ENCODE measurements at regions of chr1 and their contacts with region 1.

Region 1: DNA sequence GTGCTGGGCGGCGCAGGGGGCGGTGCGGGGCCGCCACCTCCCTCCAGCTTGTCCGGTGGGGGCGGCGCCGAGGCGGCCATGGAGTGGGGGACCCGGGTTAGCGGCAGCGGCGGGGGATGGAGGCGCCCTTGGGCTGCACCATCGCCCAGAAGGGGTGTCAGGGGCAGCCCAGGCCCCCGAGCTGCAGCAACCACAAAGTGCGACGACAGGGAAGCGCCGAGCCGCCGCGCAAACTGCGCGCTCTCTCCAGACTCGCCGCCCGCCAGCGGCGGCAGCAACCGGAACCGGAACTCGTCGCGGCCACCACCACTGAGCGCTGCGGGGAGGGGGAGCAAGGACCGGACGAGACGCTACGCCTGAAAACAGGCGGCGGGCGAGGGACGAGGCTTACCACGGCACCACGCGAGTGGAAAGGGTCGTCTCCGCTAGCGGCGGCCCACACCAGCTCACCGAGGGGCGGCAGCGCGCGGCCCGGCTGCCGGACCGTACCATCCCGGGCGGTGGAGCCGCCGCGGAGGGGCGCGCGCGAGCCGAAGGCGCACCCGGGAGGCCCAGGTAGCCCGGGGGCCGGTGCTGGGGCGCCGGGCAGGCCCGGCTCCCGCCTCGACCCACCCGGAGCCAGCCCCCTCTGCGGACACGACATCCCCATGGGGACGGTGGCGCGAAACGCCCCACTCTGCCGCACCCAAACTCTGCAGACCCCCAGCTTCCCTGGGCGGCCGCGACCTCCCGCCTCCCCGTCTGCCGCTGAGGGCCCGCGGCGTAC is at the start of gene PYGO2:
- DNase-seq: no peak
- ATAC-seq: peak; percentile 94
- H3K4me3 ChIP-seq: peak within 1 kb of the TSS; percentile 88
- H3K27ac ChIP-seq: peak within 1 kb of the TSS; percentile 97
- H3K4me1 ChIP-seq: peaks cover 7% of the 10 kb centered on the region
- H3K27me3 ChIP-seq: no peaks in the 10 kb centered on the region
- CTCF ChIP-seq: peak; percentile 44 to 73 (median 52); a peak in 5 of 6 replicates
- EP300 ChIP-seq: no peak
- POLR2A ChIP-seq: peak; percentile 95
- RAD21 ChIP-seq: peak; percentile 38
- polyA plus RNA-seq, gene PYGO2: 8.1 to 8.3 TPM

Region 2: DNA sequence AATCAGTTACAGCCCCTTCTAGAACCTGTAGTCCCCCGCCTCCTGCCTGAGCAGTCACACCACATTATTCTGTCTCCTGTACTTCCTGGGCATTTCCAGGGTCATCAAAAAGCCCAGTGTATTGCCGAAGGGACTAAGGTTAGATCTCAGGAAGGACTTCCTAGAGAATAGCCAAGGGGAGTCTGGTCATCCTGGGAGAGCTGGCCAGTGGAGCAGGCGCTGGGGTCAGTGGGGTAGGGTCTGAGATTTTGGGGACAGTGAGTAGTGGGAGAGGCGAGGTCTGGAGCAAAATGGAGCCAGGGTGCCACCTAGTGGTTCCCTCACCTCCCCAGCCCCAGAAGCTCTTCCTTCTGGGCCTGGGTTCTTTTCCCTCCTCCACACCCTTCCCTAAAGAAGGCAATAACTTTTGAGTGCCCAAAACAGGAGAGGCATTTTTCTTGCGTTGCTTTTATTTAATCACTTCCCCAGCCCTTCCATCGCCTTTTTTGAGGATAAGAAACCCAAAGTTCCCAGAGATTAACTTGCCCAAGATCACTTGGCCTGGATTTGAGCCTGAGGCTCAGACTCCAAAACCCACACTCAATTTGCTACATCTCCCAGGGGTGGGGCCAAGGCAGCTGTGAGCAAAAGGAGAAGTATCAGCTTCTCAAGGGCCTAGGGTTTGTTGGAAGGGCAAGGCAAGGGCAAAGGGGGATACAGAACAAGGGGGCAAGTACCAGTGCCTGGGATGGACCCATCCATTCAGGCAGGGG is 17.9 kb before region 1 on chr1:
- CTCF ChIA-PET with region 1: interaction called, 16 read pairs
- POLR2A ChIA-PET with region 1: interaction called, 19 read pairs
- RAD21 ChIA-PET with region 1: interaction called, 13 read pairs
- SMC1A ChIA-PET with region 1: interaction called, 5 read pairs
- in situ Hi-C with region 1: no loop called
- intact Hi-C with region 1: no loop called
- DNase-seq: no peak
- ATAC-seq: peak; percentile 37
- H3K4me3 ChIP-seq: peak overlapping the region; percentile 77
- H3K27ac ChIP-seq: peak overlapping the region; percentile 100
- H3K4me1 ChIP-seq: peaks cover 63% of the 10 kb centered on the region
- H3K27me3 ChIP-seq: no peaks in the 10 kb centered on the region
- CTCF ChIP-seq: peak; percentile 88 to 90 (median 89)
- EP300 ChIP-seq: no peak
- POLR2A ChIP-seq: no peak
- RAD21 ChIP-seq: peak; percentile 71

Region 3: GRCh38 chr1:154974063-154974807 is 12.6 kb after region 1 on chr1 and contains the start of gene CKS1B:
- CTCF ChIA-PET with region 1: interaction called, 14 read pairs
- POLR2A ChIA-PET with region 1: interaction called, 140 read pairs
- RAD21 ChIA-PET with region 1: interaction called, 15 read pairs
- SMC1A ChIA-PET with region 1: interaction called, 14 read pairs
- in situ Hi-C with region 1: no loop called
- intact Hi-C with region 1: no loop called
- DNase-seq: peak; percentile 100
- ATAC-seq: peak; percentile 87
- H3K4me3 ChIP-seq: peak within 1 kb of the TSS; percentile 90
- H3K27ac ChIP-seq: peak within 1 kb of the TSS; percentile 96
- H3K4me1 ChIP-seq: peaks cover 28% of the 10 kb centered on the region
- H3K27me3 ChIP-seq: no peaks in the 10 kb centered on the region
- CTCF ChIP-seq: no peak
- EP300 ChIP-seq: no peak
- POLR2A ChIP-seq: peak; percentile 85
- RAD21 ChIP-seq: no peak
- polyA plus RNA-seq, gene CKS1B: 598 to 608 TPM

Region 4: GRCh38 chr1:155017041-155017945 is 55.6 kb after region 1 on chr1:
- CTCF ChIA-PET with region 1: interaction called, 7 read pairs
- POLR2A ChIA-PET with region 1: interaction called, 3 read pairs
- RAD21 ChIA-PET with region 1: interaction called, 3 read pairs
- SMC1A ChIA-PET with region 1: interaction called, 11 read pairs
- in situ Hi-C with region 1: no loop called
- intact Hi-C with region 1: no loop called
- DNase-seq: peak; percentile 47
- ATAC-seq: peak; percentile 98
- H3K4me3 ChIP-seq: peak overlapping the region; percentile 65
- H3K27ac ChIP-seq: peak overlapping the region; percentile 75
- H3K4me1 ChIP-seq: peaks cover 23% of the 10 kb centered on the region
- H3K27me3 ChIP-seq: no peaks in the 10 kb centered on the region
- CTCF ChIP-seq: peak; percentile 99 to 100 (median 100); a peak in 5 of 6 replicates
- EP300 ChIP-seq: 0 out of 4 replicates have a peak, but pooled peaks of 1 of the 2 experiments have one; percentile 26
- POLR2A ChIP-seq: peak; percentile 69
- RAD21 ChIP-seq: peak; percentile 64

Region 5: DNA sequence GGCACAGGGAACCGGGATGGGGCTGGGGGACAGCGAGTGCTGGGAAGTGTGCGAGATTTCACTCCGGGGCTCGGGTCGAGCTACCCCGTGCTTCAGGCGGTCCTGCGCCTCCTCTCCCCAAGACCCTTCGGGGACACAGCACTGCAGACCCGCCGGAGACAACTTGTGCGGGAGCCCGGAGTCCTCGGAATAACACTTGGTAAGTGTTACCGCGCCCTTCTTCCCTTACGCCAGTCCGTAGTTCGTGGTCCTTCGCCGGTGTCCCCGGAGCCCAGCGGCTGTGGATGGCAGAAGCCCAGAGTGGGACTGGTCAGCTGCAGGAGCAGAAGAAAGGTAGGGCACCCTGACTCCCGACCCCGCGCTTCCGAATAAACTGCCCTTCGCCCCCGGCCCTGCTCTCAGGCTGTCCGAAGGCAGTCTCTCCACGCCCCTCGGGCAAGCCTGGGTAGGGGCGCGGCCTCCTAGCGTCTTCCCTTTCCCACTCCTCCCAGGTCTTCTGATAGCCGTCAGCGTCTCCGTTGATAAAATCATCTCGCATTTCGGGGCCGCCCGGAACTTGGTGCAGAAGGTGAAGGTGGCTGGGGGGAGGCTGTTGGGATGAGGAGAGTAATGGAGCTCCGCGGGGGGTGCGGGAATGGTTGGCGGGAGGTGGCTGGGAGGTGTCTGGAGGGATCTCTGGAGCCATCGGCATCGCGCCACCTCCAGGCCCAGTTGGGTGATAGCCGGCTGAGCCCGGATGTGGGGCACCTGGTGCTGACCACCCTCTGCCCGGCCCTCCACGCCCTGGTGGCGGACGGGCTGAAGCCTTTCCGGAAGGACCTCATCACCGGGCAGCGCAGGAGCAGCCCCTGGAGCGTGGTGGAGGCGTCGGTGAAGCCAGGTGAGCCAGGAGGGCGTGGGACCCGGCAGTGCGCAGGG is 363.2 kb after region 1 on chr1:
- CTCF ChIA-PET with region 1: no interaction called
- POLR2A ChIA-PET with region 1: no interaction called
- RAD21 ChIA-PET with region 1: no interaction called
- SMC1A ChIA-PET with region 1: no interaction called
- in situ Hi-C with region 1: no loop called
- intact Hi-C with region 1: no loop called
- DNase-seq: no peak
- ATAC-seq: peak; percentile 10
- H3K4me3 ChIP-seq: peak overlapping the region; percentile 88
- H3K27ac ChIP-seq: peak overlapping the region; percentile 3; the same call in 1 of the 2 replicates
- H3K4me1 ChIP-seq: peaks cover 7% of the 10 kb centered on the region
- H3K27me3 ChIP-seq: no peaks in the 10 kb centered on the region
- CTCF ChIP-seq: peak; percentile 19 to 46 (median 45); a peak in 5 of 6 replicates
- EP300 ChIP-seq: no peak
- POLR2A ChIP-seq: no peak
- RAD21 ChIP-seq: no peak

Measured in GM12878 (cell line).